Breast epithelium (tissue), 4 donors: ENCODE measurements at regions of chr10 and their contacts with region 1.

Region 1: GRCh38 chr10:23725548-23725947 is 286.7 kb downstream of the OTUD1 start:
- DNase-seq: no peak
- H3K4me3 ChIP-seq: no peak overlapping the region
- H3K27ac ChIP-seq: no peak overlapping the region
- H3K4me1 ChIP-seq: no peaks in the 10 kb centered on the region
- H3K27me3 ChIP-seq: no peaks in the 10 kb centered on the region
- CTCF ChIP-seq: no peak
- POLR2A ChIP-seq: no peak

Region 2: DNA sequence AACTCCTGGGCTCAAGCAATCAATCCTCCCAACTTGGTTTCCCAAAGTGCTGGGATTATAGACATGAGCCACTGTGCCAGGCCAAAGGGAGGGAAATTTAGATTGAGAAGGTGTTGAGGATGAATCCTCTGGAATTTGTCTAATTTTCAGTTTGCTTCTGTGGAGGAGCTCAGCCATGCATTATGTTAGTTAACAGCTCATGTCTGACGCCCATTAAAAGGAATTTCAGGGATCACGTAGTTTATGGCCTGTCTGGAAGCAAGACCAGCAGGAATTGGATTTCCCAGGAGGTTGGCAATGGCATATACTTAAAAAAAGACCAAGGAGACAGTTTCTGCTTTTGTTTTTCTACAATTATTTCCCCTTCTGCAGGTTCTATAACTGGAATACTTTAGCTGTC is 120.9 kb before region 1 on chr10:
- intact Hi-C with region 1: loop called (anchors 5 kb)
- DNase-seq: no peak
- H3K4me3 ChIP-seq: no peak overlapping the region
- H3K27ac ChIP-seq: no peak overlapping the region
- H3K4me1 ChIP-seq: no peaks in the 10 kb centered on the region
- H3K27me3 ChIP-seq: no peaks in the 10 kb centered on the region
- CTCF ChIP-seq: no peak
- POLR2A ChIP-seq: no peak

Region 3: GRCh38 chr10:23692736-23693135 is 32.8 kb before region 1 on chr10:
- intact Hi-C with region 1: no loop called
- DNase-seq: no peak
- H3K4me3 ChIP-seq: no peak overlapping the region
- H3K27ac ChIP-seq: no peak overlapping the region
- H3K4me1 ChIP-seq: peaks cover 0 to 15% of the 10 kb centered on the region in 2 donors
- H3K27me3 ChIP-seq: peaks cover 0 to 40% of the 10 kb centered on the region in 2 donors
- CTCF ChIP-seq: no peak
- POLR2A ChIP-seq: no peak

Region 4: DNA sequence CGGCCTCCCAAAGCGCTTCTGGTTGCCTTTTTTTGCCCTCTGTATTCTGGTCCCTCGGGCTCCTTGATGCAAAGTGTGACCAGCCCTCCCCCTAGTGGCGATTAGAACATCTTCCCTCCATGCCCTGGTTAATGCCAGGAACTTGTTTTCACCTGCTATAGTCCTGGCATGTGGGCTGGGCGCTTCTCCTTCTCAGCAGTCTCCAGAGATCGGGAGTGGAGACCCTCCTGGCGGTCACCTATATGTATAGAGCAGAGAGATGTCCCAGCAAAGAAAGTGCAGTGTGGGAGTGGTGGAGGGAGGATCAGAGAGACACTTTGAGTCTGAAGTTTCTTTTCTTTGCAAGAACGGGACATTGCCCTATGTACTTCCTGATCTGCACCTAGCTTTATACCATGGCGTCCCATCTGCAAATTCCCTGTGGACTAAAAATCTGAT is 22.6 kb before region 1 on chr10:
- intact Hi-C with region 1: no loop called
- DNase-seq: peak in 1 of 2 donors; percentile 23
- H3K4me3 ChIP-seq: peak overlapping the region in 2 of 3 donors; percentile 23 to 41
- H3K27ac ChIP-seq: no peak overlapping the region
- H3K4me1 ChIP-seq: no peaks in the 10 kb centered on the region
- H3K27me3 ChIP-seq: no peaks in the 10 kb centered on the region
- CTCF ChIP-seq: peak; percentile 45 to 71 (median 65)
- POLR2A ChIP-seq: no peak

Region 5: DNA sequence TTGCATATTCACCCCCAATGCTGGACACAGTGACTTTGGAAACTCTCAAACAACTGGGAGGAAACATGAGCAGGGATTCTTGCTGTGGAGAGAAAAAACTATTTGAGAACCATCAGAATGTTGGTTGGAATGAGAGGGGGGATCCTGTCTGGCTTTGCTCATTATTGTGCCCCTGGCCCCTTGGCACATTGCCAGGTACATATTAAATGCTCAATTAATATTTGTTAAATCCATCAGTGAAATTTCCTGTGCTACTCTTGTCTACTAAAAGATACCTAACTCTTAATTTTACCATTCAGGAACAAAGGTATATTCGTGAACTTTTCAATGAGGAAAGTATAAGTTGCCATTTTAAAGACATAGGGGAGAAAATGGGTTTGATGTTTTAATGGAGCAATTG is 42.7 kb after region 1 on chr10:
- intact Hi-C with region 1: no loop called
- DNase-seq: no peak
- H3K4me3 ChIP-seq: no peak overlapping the region
- H3K27ac ChIP-seq: no peak overlapping the region
- H3K4me1 ChIP-seq: no peaks in the 10 kb centered on the region
- H3K27me3 ChIP-seq: no peaks in the 10 kb centered on the region
- CTCF ChIP-seq: no peak
- POLR2A ChIP-seq: no peak

Region 6: GRCh38 chr10:25232204-25232603 is 1506.7 kb after region 1 on chr10:
- intact Hi-C with region 1: loop called (anchors 5 kb)
- DNase-seq: no peak
- H3K4me3 ChIP-seq: no peak overlapping the region
- H3K27ac ChIP-seq: no peak overlapping the region
- H3K4me1 ChIP-seq: no peaks in the 10 kb centered on the region
- H3K27me3 ChIP-seq: no peaks in the 10 kb centered on the region
- CTCF ChIP-seq: no peak
- POLR2A ChIP-seq: no peak